Endothelial cell of umbilical vein (primary cell): ENCODE measurements at regions of chr2 and their contacts with region 1.

Region 1: DNA sequence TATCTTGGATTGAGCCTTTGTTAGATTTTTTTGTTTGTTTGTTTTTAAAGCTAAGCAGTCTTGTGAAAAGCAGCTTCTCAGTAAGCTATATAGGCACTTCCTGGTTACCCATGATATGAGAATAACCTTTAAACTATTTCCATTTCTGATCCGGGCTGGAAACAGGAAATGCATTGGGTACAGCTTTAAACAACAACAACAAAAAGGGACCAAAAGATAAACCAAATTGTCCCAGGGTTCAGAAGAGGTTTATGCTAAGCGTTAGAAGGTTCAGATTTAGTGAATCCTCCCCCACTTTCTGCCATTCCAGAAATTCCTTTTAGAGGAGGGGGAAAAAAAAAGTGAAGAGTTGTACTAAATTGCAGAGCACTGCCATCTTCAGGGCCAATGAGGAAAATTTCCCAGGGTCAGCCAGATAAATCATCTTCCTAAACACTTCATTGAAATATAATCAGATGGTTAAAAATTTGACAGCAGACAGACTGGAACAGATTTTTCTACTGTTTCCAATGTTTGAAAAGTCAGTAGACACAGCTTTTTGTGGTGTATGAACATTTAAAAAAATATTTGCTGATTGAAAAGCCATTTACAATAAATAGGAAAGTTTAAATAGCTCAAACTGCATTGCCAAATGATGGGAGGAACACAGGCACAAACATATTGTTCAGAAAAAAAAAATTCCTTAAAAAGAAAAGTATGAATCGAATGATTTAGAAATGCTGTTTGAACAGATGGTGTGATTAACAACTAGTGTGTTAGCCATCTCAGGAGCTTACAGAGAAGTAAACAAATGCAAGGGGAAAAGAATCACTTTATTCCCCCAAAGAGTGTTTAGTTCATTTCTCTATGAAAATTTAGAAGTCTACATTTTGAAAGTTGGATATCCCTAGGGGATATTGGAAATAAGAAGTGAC is 189.9 kb upstream of the TANK start:
- DNase-seq: peak; percentile 90
- H3K4me3 ChIP-seq: peak overlapping the region in 1 of 3 experiments; percentile 53
- H3K27ac ChIP-seq: peak overlapping the region; percentile 71
- H3K4me1 ChIP-seq: no peaks in the 10 kb centered on the region
- H3K27me3 ChIP-seq: no peaks in the 10 kb centered on the region
- CTCF ChIP-seq: peak; percentile 51 to 53
- POLR2A ChIP-seq: no peak

Region 2: DNA sequence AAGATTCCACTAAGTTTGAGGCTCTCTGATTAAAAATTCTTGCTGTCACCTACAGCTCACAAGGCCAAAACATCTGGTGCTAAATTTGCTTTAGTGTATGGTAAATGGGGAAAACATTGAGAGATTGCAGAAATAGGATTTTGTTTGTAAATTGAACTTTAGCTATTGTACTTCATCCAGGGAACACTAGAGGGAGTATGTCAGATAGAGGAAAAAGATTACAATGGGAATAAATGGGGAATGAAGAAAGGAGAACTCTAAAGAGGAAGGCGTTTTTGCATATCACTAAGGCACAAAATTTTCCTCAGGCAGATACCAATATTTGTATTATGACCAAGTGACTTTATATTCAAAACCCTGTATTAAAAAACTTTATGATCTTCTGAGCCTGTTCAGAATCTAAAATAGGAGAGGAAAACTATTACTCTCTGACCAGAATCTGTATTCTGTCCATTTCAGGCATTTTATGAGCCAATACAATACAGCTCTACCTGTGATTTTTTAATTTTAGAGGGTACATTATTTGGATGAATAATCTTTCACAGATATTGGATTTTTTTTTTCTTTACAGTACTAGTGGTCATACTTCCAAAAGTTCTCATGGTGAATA is 717.9 kb before region 1 on chr2:
- CTCF ChIA-PET with region 1: interaction called, 26 read pairs
- POLR2A ChIA-PET with region 1: no interaction called
- dilution Hi-C with region 1: no loop called
- intact Hi-C with region 1: no loop called
- DNase-seq: peak; percentile 58
- H3K4me3 ChIP-seq: no peak overlapping the region
- H3K27ac ChIP-seq: no peak overlapping the region
- H3K4me1 ChIP-seq: no peaks in the 10 kb centered on the region
- H3K27me3 ChIP-seq: no peaks in the 10 kb centered on the region
- CTCF ChIP-seq: peak; percentile 52 to 57
- POLR2A ChIP-seq: no peak

Region 3: GRCh38 chr2:160324161-160324800 is 646.0 kb before region 1 on chr2:
- CTCF ChIA-PET with region 1: interaction called, 88 read pairs
- POLR2A ChIA-PET with region 1: no interaction called
- dilution Hi-C with region 1: no loop called
- intact Hi-C with region 1: loop called (anchors 1 kb)
- DNase-seq: peak; percentile 74
- H3K4me3 ChIP-seq: no peak overlapping the region
- H3K27ac ChIP-seq: no peak overlapping the region
- H3K4me1 ChIP-seq: no peaks in the 10 kb centered on the region
- H3K27me3 ChIP-seq: no peaks in the 10 kb centered on the region
- CTCF ChIP-seq: peak; percentile 63
- POLR2A ChIP-seq: no peak

Region 4: DNA sequence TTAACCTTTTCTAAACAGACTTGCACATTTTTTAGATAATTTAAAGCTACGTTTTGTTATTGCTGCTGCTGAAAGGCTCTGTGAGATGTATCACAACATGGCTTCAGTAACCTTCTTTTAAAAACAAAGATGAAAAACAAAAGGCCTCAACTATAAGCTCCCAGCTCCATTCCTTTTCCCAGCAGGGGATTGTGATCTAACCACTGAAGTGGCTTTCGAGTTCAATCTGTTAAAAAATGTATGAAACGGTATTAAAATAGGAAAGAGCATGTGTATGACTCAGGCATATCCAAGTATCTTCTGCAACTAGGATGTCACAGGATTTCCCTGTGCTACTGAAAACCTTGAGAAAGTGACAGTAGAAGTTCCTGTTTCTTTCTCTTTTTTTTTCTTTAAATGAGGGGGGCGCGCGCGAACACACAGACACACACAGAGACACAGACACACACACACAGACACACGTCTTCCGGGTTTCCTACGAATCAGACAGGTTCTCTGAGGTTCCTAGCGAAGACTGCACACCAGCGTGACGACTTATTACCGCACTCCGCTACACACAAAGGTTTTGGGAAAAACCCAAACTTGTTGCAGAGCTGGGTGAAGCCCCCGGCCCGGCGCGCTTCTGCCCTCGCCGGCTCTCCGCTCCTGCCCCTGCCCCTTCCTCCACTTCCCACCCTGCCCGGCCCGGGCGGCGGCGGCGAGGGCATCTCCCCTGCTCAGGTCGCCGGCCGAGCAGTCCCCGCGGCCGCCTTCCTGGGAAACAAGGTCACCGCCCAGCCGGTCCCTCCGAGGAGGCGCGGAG is 563.5 kb before region 1 on chr2:
- CTCF ChIA-PET with region 1: interaction called, 15 read pairs
- POLR2A ChIA-PET with region 1: no interaction called
- dilution Hi-C with region 1: no loop called
- intact Hi-C with region 1: loop called (anchors 10 kb)
- DNase-seq: peak; percentile 77
- H3K4me3 ChIP-seq: peak overlapping the region; percentile 89 to 98 (median 95)
- H3K27ac ChIP-seq: peak overlapping the region; percentile 90
- H3K4me1 ChIP-seq: peaks cover 72% of the 10 kb centered on the region
- H3K27me3 ChIP-seq: no peaks in the 10 kb centered on the region
- CTCF ChIP-seq: no peak
- POLR2A ChIP-seq: peak; percentile 49

Region 5: GRCh38 chr2:160666154-160667060 is 303.9 kb before region 1 on chr2:
- CTCF ChIA-PET with region 1: interaction called, 3 read pairs
- POLR2A ChIA-PET with region 1: no interaction called
- dilution Hi-C with region 1: no loop called
- intact Hi-C with region 1: loop called (anchors 10 kb)
- DNase-seq: peak; percentile 99
- H3K4me3 ChIP-seq: peak overlapping the region in 1 of 3 experiments; percentile 33
- H3K27ac ChIP-seq: peak overlapping the region; percentile 89
- H3K4me1 ChIP-seq: peaks cover 14% of the 10 kb centered on the region
- H3K27me3 ChIP-seq: no peaks in the 10 kb centered on the region
- CTCF ChIP-seq: no peak
- POLR2A ChIP-seq: no peak

Region 6: GRCh38 chr2:161063157-161063954 is 93.0 kb after region 1 on chr2:
- CTCF ChIA-PET with region 1: interaction called, 10 read pairs
- POLR2A ChIA-PET with region 1: no interaction called
- dilution Hi-C with region 1: no loop called
- intact Hi-C with region 1: no loop called
- DNase-seq: peak; percentile 89
- H3K4me3 ChIP-seq: no peak overlapping the region
- H3K27ac ChIP-seq: no peak overlapping the region
- H3K4me1 ChIP-seq: peaks cover 4% of the 10 kb centered on the region
- H3K27me3 ChIP-seq: no peaks in the 10 kb centered on the region
- CTCF ChIP-seq: peak; percentile 79 to 91
- POLR2A ChIP-seq: no peak